Activated CD8-positive, alpha-beta memory T cell treated with anti-CD3 and anti-CD28 coated beads, Interleukin-2, amount 10 ng/mL, durations not matched to agents 7 days and 5 days (primary cell): ENCODE measurements at regions of chr17 and their contacts with region 1.

Region 1: GRCh38 chr17:60640503-60640902 is 37.1 kb upstream of the BCAS3 start:
- DNase-seq: no peak
- ATAC-seq: no peak
- H3K4me3 Mint-ChIP-seq: no peak overlapping the region
- H3K27ac Mint-ChIP-seq: no peak overlapping the region
- H3K4me1 Mint-ChIP-seq: peaks cover 11% of the 10 kb centered on the region
- H3K27me3 Mint-ChIP-seq: no peaks in the 10 kb centered on the region

Region 2: GRCh38 chr17:60577147-60577915 is 63.2 kb before region 1 on chr17:
- CTCF ChIA-PET with region 1: interaction called, 15 read pairs
- DNase-seq: no peak
- ATAC-seq: peak; percentile 68
- H3K4me3 Mint-ChIP-seq: peak overlapping the region; percentile 73
- H3K27ac Mint-ChIP-seq: peak overlapping the region; percentile 69
- H3K4me1 Mint-ChIP-seq: peaks cover 9% of the 10 kb centered on the region
- H3K27me3 Mint-ChIP-seq: peaks cover 13% of the 10 kb centered on the region

Region 3: DNA sequence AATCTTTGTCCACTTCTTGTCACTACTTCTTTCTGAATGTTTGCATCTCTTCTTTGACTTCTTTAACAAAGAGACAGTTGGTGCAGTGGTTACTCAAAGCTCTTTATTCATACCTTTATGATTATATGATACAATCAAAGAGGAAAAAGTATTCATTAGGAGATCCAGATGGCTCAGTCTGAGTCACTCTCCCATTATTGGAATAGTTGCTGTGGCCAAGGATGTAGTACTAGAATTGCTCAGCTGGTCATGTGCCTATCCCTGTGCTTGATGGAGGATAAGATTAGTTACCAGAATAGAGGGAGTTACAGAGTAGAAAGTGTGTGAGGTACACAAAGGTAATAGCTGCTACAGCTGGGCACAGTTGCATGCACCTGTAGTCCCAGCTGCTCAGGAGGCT is 55.5 kb after region 1 on chr17:
- CTCF ChIA-PET with region 1: no interaction called
- DNase-seq: no peak
- ATAC-seq: no peak
- H3K4me3 Mint-ChIP-seq: no peak overlapping the region
- H3K27ac Mint-ChIP-seq: no peak overlapping the region
- H3K4me1 Mint-ChIP-seq: peaks cover 5% of the 10 kb centered on the region
- H3K27me3 Mint-ChIP-seq: no peaks in the 10 kb centered on the region